ENCODE measurements at regions of chr10 and their contacts with region 1.

Region 1: GRCh38 chr10:23314835-23315239 is 29.8 kb downstream of the C10orf67 start:
- DNase-seq: peak; percentile 39
- H3K4me3 ChIP-seq: no peak overlapping the region
- H3K27ac ChIP-seq: no peak overlapping the region
- H3K4me1 ChIP-seq: no peaks in the 10 kb centered on the region
- H3K27me3 ChIP-seq: no peaks in the 10 kb centered on the region
- CTCF ChIP-seq: peak; percentile 68 to 77 (median 75)
- EP300 ChIP-seq: no peak
- POLR2A ChIP-seq: no peak

Region 2: DNA sequence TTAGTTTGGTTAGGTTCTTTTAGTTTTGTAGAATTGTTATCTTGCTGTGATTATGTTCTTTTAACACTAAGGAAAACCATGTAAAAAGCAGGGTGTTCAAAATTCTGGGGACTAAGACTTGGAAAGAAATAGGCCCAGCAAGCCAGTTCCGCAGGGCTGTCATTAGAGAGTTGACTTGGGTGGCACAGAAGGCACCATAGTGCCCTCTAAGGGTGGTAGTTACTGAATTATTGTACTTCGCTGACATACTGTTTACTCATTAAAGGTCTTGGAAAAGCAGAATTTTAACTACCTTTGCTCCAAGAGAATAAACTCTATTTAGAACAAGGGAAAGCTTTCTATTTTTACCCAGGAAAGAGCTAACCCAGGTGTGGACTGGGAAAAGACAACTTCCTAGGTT is 210.6 kb after region 1 on chr10:
- in situ Hi-C with region 1: loop called (anchors 5 to 10 kb)
- intact Hi-C with region 1: loop called (anchors 5 kb)
- DNase-seq: peak; percentile 19
- H3K4me3 ChIP-seq: no peak overlapping the region
- H3K27ac ChIP-seq: no peak overlapping the region
- H3K4me1 ChIP-seq: no peaks in the 10 kb centered on the region
- H3K27me3 ChIP-seq: no peaks in the 10 kb centered on the region
- CTCF ChIP-seq: peak; percentile 42 to 54 (median 46)
- EP300 ChIP-seq: no peak
- POLR2A ChIP-seq: no peak

Region 3: DNA sequence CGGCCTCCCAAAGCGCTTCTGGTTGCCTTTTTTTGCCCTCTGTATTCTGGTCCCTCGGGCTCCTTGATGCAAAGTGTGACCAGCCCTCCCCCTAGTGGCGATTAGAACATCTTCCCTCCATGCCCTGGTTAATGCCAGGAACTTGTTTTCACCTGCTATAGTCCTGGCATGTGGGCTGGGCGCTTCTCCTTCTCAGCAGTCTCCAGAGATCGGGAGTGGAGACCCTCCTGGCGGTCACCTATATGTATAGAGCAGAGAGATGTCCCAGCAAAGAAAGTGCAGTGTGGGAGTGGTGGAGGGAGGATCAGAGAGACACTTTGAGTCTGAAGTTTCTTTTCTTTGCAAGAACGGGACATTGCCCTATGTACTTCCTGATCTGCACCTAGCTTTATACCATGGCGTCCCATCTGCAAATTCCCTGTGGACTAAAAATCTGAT is 388.2 kb after region 1 on chr10:
- in situ Hi-C with region 1: loop called in 3 of 4 experiments (anchors 10 to 25 kb)
- intact Hi-C with region 1: loop called (anchors 5 kb)
- DNase-seq: peak; percentile 47
- H3K4me3 ChIP-seq: no peak overlapping the region
- H3K27ac ChIP-seq: no peak overlapping the region
- H3K4me1 ChIP-seq: no peaks in the 10 kb centered on the region
- H3K27me3 ChIP-seq: peaks cover 10% of the 10 kb centered on the region
- CTCF ChIP-seq: peak; percentile 51 to 65 (median 60)
- EP300 ChIP-seq: no peak
- POLR2A ChIP-seq: no peak

Region 4: GRCh38 chr10:24197263-24197662 is 882.4 kb after region 1 on chr10:
- in situ Hi-C with region 1: loop called in 2 of 4 experiments (anchors 25 kb)
- intact Hi-C with region 1: no loop called
- DNase-seq: no peak
- H3K4me3 ChIP-seq: no peak overlapping the region
- H3K27ac ChIP-seq: no peak overlapping the region
- H3K4me1 ChIP-seq: peaks cover 0 to 10% (median 4%) of the 10 kb centered on the region in 4 donors
- H3K27me3 ChIP-seq: no peaks in the 10 kb centered on the region
- CTCF ChIP-seq: no peak
- EP300 ChIP-seq: no peak
- POLR2A ChIP-seq: no peak

Region 5: DNA sequence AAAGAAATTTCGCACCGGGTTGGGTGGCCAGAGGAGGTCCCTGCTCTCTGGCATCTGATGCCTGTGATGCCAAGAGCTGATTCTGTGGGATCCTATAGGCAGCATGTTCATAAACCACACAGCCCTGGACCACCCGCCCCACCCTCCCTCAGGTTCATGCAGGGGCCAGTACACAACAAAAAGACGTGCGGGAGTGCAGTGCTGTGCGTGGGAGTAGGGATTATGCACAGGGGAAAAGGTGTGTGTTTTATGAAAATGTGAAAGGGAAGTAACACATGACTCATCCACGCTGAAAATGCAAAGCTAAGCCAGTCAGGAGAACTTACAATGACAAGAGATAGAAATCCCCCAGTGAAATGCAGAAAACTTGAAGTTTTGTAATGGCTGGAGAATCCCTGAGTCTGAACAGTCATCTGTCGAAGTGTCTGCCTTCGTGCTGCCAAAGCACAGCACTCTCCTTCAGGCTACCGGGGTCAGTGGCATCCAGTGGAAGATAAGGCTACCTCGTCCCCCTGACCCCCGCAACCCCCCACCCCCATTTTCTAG is 895.2 kb after region 1 on chr10:
- in situ Hi-C with region 1: loop called in 1 of 4 experiments (anchors 25 kb)
- intact Hi-C with region 1: no loop called
- DNase-seq: no peak
- H3K4me3 ChIP-seq: peak overlapping the region in 3 of 4 donors; percentile 46 to 75 (median 58)
- H3K27ac ChIP-seq: peak overlapping the region; percentile 81 to 89 (median 87)
- H3K4me1 ChIP-seq: peaks cover 16 to 43% (median 35%) of the 10 kb centered on the region in 4 donors
- H3K27me3 ChIP-seq: no peaks in the 10 kb centered on the region
- CTCF ChIP-seq: no peak
- EP300 ChIP-seq: no peak
- POLR2A ChIP-seq: no peak

Measured in transverse colon (tissue), 4 donors.